Natural killer cell (primary cell): ENCODE measurements at regions of chr6 and their contacts with region 1.

Region 1: DNA sequence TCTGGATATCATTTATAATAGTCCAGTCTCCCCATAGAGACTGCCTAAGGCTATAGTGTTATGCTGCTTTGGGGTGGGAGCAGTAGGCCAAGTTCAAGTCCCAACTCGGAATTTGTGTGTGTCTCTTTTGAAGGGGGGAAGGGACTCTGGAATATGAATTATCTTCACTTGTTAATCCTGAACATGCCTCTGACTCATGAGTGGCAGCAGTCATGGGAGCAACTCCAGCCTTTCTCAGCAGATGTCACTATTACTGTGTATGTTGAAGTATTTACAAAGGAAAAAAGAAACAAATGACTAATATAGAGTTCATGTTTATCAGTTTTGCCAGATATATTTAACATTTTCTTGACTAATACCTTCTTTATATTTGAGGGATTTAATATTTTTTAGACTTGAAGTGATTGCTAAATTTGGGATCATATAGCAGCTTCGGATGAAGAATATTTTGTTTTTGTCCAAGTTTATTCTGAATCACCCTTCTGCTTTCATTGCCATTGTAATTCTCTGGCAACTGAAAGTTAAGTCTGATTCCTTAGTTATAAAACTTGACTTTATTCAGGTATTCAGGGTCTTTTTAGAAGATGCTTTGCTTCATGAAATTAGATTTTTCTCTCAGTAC is 23.4 kb downstream of the FAM217A start:
- DNase-seq: peak in 1 of 2 donors; percentile 35
- ATAC-seq: no peak
- H3K4me3 ChIP-seq: no peak overlapping the region
- H3K4me3 Mint-ChIP-seq: no peak overlapping the region
- H3K27ac ChIP-seq: no peak overlapping the region
- H3K27ac Mint-ChIP-seq: peak overlapping the region in 1 of 2 donors; percentile 53
- H3K4me1 ChIP-seq: peaks cover 9% of the 10 kb centered on the region
- H3K4me1 Mint-ChIP-seq: peaks cover 18 to 24% of the 10 kb centered on the region in 2 donors
- H3K27me3 ChIP-seq: no peaks in the 10 kb centered on the region
- H3K27me3 Mint-ChIP-seq: no peaks in the 10 kb centered on the region
- CTCF ChIP-seq: no peak

Region 2: GRCh38 chr6:4135665-4136353 is 80.3 kb after region 1 on chr6:
- intact Hi-C with region 1: loop called (anchors 1 kb)
- DNase-seq: peak; percentile 80 to 96
- ATAC-seq: peak; percentile 84 to 94 (median 91)
- H3K4me3 ChIP-seq: peak overlapping the region; percentile 74
- H3K4me3 Mint-ChIP-seq: peak overlapping the region; percentile 81
- H3K27ac ChIP-seq: peak overlapping the region; percentile 46
- H3K27ac Mint-ChIP-seq: peak overlapping the region; percentile 34 to 94
- H3K4me1 ChIP-seq: peaks cover 12% of the 10 kb centered on the region
- H3K4me1 Mint-ChIP-seq: peaks cover 19 to 26% of the 10 kb centered on the region in 2 donors
- H3K27me3 ChIP-seq: no peaks in the 10 kb centered on the region
- H3K27me3 Mint-ChIP-seq: peaks cover 5 to 20% of the 10 kb centered on the region in 2 donors
- CTCF ChIP-seq: no peak

Region 3: GRCh38 chr6:4155848-4156466 is 100.4 kb after region 1 on chr6:
- intact Hi-C with region 1: loop called (anchors 2 kb)
- DNase-seq: peak; percentile 59 to 93
- ATAC-seq: peak; percentile 87 to 99 (median 99)
- H3K4me3 ChIP-seq: no peak overlapping the region
- H3K4me3 Mint-ChIP-seq: no peak overlapping the region
- H3K27ac ChIP-seq: no peak overlapping the region
- H3K27ac Mint-ChIP-seq: no peak overlapping the region
- H3K4me1 ChIP-seq: no peaks in the 10 kb centered on the region
- H3K4me1 Mint-ChIP-seq: peaks cover 0 to 5% of the 10 kb centered on the region in 2 donors
- H3K27me3 ChIP-seq: no peaks in the 10 kb centered on the region
- H3K27me3 Mint-ChIP-seq: peaks cover 10 to 20% of the 10 kb centered on the region in 2 donors
- CTCF ChIP-seq: peak; percentile 83

Region 4: DNA sequence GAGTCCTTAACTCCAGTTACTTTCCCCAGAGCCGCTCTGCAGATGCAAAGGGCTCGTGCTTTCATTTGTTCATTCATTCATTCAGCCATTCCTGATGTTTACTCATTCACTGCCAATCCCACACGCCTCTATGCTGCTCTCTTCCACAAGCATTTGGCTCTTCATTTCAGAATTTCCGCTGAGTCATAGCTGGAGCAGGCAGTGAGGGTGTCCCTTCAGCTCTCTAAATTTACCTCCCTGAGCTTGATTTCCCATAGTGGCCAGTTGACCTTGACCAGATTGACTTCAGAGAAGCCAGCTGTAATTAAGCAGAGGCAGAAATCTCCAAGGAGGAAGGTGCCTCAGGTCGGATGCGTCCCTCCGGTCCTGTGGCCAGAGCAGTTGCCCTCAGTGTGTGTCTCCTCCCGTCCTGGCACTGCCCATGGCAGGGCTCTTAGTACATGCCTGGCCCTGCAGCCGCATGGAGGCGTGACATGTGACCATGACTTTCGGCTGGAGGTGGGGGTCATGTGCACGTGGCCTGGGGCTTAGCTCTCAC is 347.0 kb after region 1 on chr6:
- intact Hi-C with region 1: no loop called
- DNase-seq: no peak
- ATAC-seq: no peak
- H3K4me3 ChIP-seq: no peak overlapping the region
- H3K4me3 Mint-ChIP-seq: no peak overlapping the region
- H3K27ac ChIP-seq: no peak overlapping the region
- H3K27ac Mint-ChIP-seq: no peak overlapping the region
- H3K4me1 ChIP-seq: no peaks in the 10 kb centered on the region
- H3K4me1 Mint-ChIP-seq: no peaks in the 10 kb centered on the region
- H3K27me3 ChIP-seq: no peaks in the 10 kb centered on the region
- H3K27me3 Mint-ChIP-seq: peaks cover 18 to 37% of the 10 kb centered on the region in 2 donors
- CTCF ChIP-seq: no peak